CD8-positive, alpha-beta T cell (primary cell): ENCODE measurements at regions of chr20 and their contacts with region 1.

Region 1: GRCh38 chr20:62953839-62954703 is 1.6 kb downstream of the SLC17A9 start:
- DNase-seq: peak; percentile 46 to 93 (median 81)
- ATAC-seq: peak; percentile 88
- H3K4me3 ChIP-seq: peak overlapping the region; percentile 50 to 57
- H3K4me3 Mint-ChIP-seq: peak overlapping the region; percentile 82
- H3K27ac ChIP-seq: peak overlapping the region; percentile 62 to 92
- H3K27ac Mint-ChIP-seq: peak overlapping the region; percentile 91
- H3K4me1 ChIP-seq: peaks cover 48% of the 10 kb centered on the region
- H3K4me1 Mint-ChIP-seq: peaks cover 42% of the 10 kb centered on the region
- H3K27me3 ChIP-seq: no peaks in the 10 kb centered on the region
- H3K27me3 Mint-ChIP-seq: no peaks in the 10 kb centered on the region
- CTCF ChIP-seq: no peak

Region 2: DNA sequence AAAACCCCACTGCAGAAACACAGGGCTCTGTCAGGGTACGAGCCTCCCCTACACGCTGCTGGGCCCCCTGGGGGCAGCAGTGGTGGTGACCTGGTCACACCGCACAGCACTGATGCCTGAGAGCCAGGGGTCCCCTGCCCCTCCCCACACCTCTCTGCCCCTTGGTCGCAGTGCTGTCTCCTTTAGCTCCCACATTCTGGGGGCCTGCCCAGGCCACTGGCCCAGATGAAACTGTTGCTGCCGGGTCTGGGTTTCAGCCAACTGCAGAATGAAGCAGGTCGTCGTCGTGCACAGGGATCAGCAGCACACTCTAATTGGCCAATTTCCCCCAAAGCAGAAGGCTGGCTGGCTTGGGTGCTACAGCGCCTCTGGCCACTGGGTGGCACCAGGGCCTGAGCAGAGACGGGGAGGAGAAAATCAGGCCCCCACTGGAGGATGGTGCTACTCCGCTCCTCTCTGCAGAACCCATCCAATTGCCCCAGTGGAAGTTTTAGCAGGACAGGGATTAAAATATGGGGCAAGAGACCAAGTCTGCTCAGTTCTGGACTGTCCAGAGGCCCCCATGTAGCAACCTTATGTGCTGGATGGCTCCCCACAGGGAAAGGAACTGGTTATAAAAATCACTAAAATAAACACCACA is 53.9 kb before region 1 on chr20:
- CTCF ChIA-PET with region 1: interaction called, 16 read pairs
- POLR2A ChIA-PET with region 1: interaction called, 3 read pairs
- intact Hi-C with region 1: no loop called
- DNase-seq: peak; percentile 62 to 88 (median 81)
- ATAC-seq: peak; percentile 93
- H3K4me3 ChIP-seq: no peak overlapping the region
- H3K4me3 Mint-ChIP-seq: peak overlapping the region; percentile 29
- H3K27ac ChIP-seq: peak overlapping the region; percentile 17 to 33
- H3K27ac Mint-ChIP-seq: peak overlapping the region; percentile 90
- H3K4me1 ChIP-seq: peaks cover 23% of the 10 kb centered on the region
- H3K4me1 Mint-ChIP-seq: peaks cover 30% of the 10 kb centered on the region
- H3K27me3 ChIP-seq: no peaks in the 10 kb centered on the region
- H3K27me3 Mint-ChIP-seq: no peaks in the 10 kb centered on the region
- CTCF ChIP-seq: peak; percentile 93

Region 3: DNA sequence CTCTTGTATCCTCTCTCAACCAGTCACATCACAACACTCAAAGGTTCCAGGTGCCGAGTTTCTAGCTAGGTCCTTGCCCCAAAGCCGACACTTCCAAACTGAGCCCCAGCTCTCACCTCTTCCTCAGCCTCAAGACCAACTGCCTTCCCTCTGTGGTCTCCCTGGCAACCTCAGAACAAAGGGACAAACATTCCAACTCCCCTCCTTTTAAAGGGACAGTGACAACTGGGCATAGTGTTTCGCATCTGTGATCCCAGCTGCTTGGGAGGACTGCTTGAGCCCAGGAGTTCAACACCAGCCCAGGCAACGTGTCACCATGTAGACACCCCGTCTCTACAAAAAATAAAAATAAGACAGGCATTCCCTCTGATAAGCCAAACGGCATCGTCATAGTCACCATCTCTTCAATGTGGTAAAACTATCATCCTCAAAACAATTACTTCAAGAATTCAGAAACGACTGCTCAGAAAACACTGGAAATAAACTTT is 39.1 kb before region 1 on chr20:
- CTCF ChIA-PET with region 1: interaction called, 6 read pairs
- POLR2A ChIA-PET with region 1: interaction called, 9 read pairs
- intact Hi-C with region 1: loop called in 1 of 2 experiments (anchors 5 kb)
- DNase-seq: peak in 3 of 9 experiments; percentile 22 to 65 (median 43)
- ATAC-seq: no peak
- H3K4me3 ChIP-seq: peak overlapping the region in 1 of 2 experiments; percentile 4
- H3K4me3 Mint-ChIP-seq: peak overlapping the region; percentile 74
- H3K27ac ChIP-seq: peak overlapping the region; percentile 12 to 17
- H3K27ac Mint-ChIP-seq: peak overlapping the region; percentile 93
- H3K4me1 ChIP-seq: peaks cover 71% of the 10 kb centered on the region
- H3K4me1 Mint-ChIP-seq: peaks cover 81% of the 10 kb centered on the region
- H3K27me3 ChIP-seq: no peaks in the 10 kb centered on the region
- H3K27me3 Mint-ChIP-seq: no peaks in the 10 kb centered on the region
- CTCF ChIP-seq: no peak

Region 4: GRCh38 chr20:62926239-62927104 is 27.6 kb before region 1 on chr20 and contains the start of gene DIDO1:
- CTCF ChIA-PET with region 1: interaction called, 11 read pairs
- POLR2A ChIA-PET with region 1: interaction called, 8 read pairs
- intact Hi-C with region 1: loop called (anchors 1 kb)
- DNase-seq: peak; percentile 76 to 95 (median 91)
- ATAC-seq: peak; percentile 76
- H3K4me3 ChIP-seq: peak within 1 kb of the TSS; percentile 70 to 99
- H3K4me3 Mint-ChIP-seq: peak within 1 kb of the TSS; percentile 95
- H3K27ac ChIP-seq: peak within 1 kb of the TSS; percentile 75 to 96
- H3K27ac Mint-ChIP-seq: peak within 1 kb of the TSS; percentile 95
- H3K4me1 ChIP-seq: peaks cover 68% of the 10 kb centered on the region
- H3K4me1 Mint-ChIP-seq: peaks cover 75% of the 10 kb centered on the region
- H3K27me3 ChIP-seq: no peaks in the 10 kb centered on the region
- H3K27me3 Mint-ChIP-seq: no peaks in the 10 kb centered on the region
- CTCF ChIP-seq: peak; percentile 53
- total RNA-seq, gene DIDO1: 44.7 to 46.6 TPM

Region 5: DNA sequence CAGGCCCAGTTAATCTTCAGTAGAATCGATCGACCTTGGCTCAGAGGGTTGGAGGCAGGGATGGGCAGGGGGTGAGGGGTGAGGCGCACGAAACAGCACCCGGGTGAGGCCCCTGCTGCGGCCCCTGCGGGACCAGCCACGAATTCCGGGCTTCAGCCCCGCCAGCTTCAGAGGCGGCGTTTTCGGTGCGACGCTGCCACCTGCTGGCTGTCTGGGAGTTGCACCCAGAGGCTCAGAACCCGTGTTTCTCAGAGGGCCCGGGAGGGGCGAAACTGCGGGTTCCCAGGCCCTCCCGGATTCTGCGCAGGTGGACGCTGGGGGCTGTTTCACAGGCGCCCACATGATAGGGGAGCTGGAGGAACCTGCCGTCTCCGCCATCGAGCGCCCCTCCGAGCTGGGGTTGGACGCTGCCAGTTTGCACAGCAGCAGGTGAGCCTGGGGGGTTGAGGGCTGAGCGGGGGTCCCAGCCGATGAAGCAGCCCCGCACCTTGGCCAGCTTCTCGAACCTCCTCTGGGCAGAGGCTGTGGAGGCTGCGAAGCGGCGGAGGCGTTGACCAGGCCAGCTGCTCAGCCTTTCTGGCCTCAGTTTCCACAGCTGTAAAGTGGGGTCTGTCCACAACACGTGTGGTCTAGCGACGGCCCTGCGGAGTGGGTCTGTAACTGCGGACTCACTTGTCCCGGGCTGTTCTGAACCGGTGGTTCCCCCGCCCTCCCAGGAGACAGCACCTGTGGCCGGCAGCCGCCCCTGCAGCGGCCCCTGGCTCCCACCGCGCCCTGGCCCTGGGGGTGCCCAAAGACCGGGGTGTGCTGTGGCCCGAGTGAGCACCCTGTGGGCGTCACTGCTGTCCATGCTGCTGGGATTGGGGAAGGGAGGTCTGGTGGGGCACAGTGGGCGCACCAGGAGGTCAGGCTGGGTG is 55.2 kb after region 1 on chr20:
- CTCF ChIA-PET with region 1: interaction called, 19 read pairs
- POLR2A ChIA-PET with region 1: interaction called, 4 read pairs
- intact Hi-C with region 1: loop called (anchors 10 kb)
- DNase-seq: peak; percentile 78 to 93 (median 85)
- ATAC-seq: peak; percentile 63
- H3K4me3 ChIP-seq: peak overlapping the region; percentile 54 to 55
- H3K4me3 Mint-ChIP-seq: peak overlapping the region; percentile 88
- H3K27ac ChIP-seq: no peak overlapping the region
- H3K27ac Mint-ChIP-seq: no peak overlapping the region
- H3K4me1 ChIP-seq: peaks cover 53% of the 10 kb centered on the region
- H3K4me1 Mint-ChIP-seq: peaks cover 25% of the 10 kb centered on the region
- H3K27me3 ChIP-seq: peaks cover 33 to 45% of the 10 kb centered on the region in 2 experiments
- H3K27me3 Mint-ChIP-seq: peaks cover 23% of the 10 kb centered on the region
- CTCF ChIP-seq: peak; percentile 91

Region 6: DNA sequence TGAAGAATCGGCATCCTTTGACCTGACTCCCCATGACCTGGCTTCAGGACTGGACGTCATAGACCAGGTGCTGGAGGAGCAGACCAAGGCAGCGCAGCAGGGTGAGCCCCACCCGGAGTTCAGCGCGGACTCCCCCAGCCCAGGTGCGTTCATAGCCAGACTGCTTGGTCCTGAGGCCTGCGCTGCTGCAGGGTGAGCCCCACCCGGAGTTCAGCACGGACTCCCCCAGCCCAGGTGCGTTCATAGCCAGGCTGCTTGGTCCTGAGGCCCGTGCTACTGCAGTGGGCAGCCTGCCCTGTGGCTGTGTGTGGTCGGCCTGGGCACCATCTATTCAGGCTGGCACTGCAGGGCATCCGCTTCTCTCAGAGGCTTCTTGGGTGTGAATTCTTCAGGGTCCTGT is 719.9 kb after region 1 on chr20:
- CTCF ChIA-PET with region 1: no interaction called
- POLR2A ChIA-PET with region 1: no interaction called
- intact Hi-C with region 1: no loop called
- DNase-seq: no peak
- ATAC-seq: no peak
- H3K4me3 ChIP-seq: no peak overlapping the region
- H3K4me3 Mint-ChIP-seq: no peak overlapping the region
- H3K27ac ChIP-seq: no peak overlapping the region
- H3K27ac Mint-ChIP-seq: no peak overlapping the region
- H3K4me1 ChIP-seq: no peaks in the 10 kb centered on the region
- H3K4me1 Mint-ChIP-seq: no peaks in the 10 kb centered on the region
- H3K27me3 ChIP-seq: no peaks in the 10 kb centered on the region
- H3K27me3 Mint-ChIP-seq: no peaks in the 10 kb centered on the region
- CTCF ChIP-seq: no peak